ENCODE measurements at regions of chr21 and their contacts with region 1.

Region 1: GRCh38 chr21:35204850-35205541 is 155.9 kb upstream of the RUNX1 start:
- DNase-seq: peak; percentile 98
- ATAC-seq: peak; percentile 78
- H3K4me3 ChIP-seq: peak overlapping the region; percentile 25; the same call in 1 of the 2 replicates
- H3K27ac ChIP-seq: peak overlapping the region; percentile 91
- H3K4me1 ChIP-seq: peaks cover 40% of the 10 kb centered on the region
- H3K27me3 ChIP-seq: no peaks in the 10 kb centered on the region
- CTCF ChIP-seq: peak; percentile 44
- POLR2A ChIP-seq: peak; percentile 53; the same call in 1 of the 2 replicates
- RAD21 ChIP-seq: peak; percentile 43

Region 2: GRCh38 chr21:34807146-34807880 is 397.7 kb before region 1 on chr21:
- CTCF ChIA-PET with region 1: no interaction called
- POLR2A ChIA-PET with region 1: no interaction called
- dilution Hi-C with region 1: no loop called
- in situ Hi-C with region 1: no loop called
- intact Hi-C with region 1: loop called (anchors 5 kb)
- DNase-seq: peak; percentile 97
- ATAC-seq: peak; percentile 62
- H3K4me3 ChIP-seq: no peak overlapping the region
- H3K27ac ChIP-seq: peak overlapping the region; percentile 92
- H3K4me1 ChIP-seq: peaks cover 44% of the 10 kb centered on the region
- H3K27me3 ChIP-seq: no peaks in the 10 kb centered on the region
- CTCF ChIP-seq: no peak
- POLR2A ChIP-seq: no peak; the same call in 1 of the 2 replicates
- RAD21 ChIP-seq: no peak

Region 3: GRCh38 chr21:35043549-35043948 is 161.4 kb before region 1 on chr21:
- CTCF ChIA-PET with region 1: no interaction called
- POLR2A ChIA-PET with region 1: no interaction called
- dilution Hi-C with region 1: no loop called
- in situ Hi-C with region 1: no loop called
- intact Hi-C with region 1: no loop called
- DNase-seq: no peak
- ATAC-seq: no peak
- H3K4me3 ChIP-seq: no peak overlapping the region
- H3K27ac ChIP-seq: no peak overlapping the region
- H3K4me1 ChIP-seq: peaks cover 12% of the 10 kb centered on the region
- H3K27me3 ChIP-seq: no peaks in the 10 kb centered on the region
- CTCF ChIP-seq: no peak
- POLR2A ChIP-seq: no peak
- RAD21 ChIP-seq: no peak

Region 4: GRCh38 chr21:35084869-35085268 is 120.1 kb before region 1 on chr21:
- CTCF ChIA-PET with region 1: interaction called, 4 read pairs
- POLR2A ChIA-PET with region 1: interaction called, 9 read pairs
- dilution Hi-C with region 1: no loop called
- in situ Hi-C with region 1: no loop called
- intact Hi-C with region 1: loop called (anchors 5 kb)
- DNase-seq: peak; percentile 99
- ATAC-seq: peak; percentile 88
- H3K4me3 ChIP-seq: no peak overlapping the region
- H3K27ac ChIP-seq: peak overlapping the region; percentile 65; the same call in 1 of the 2 replicates
- H3K4me1 ChIP-seq: peaks cover 10% of the 10 kb centered on the region
- H3K27me3 ChIP-seq: no peaks in the 10 kb centered on the region
- CTCF ChIP-seq: peak; percentile 31
- POLR2A ChIP-seq: no peak
- RAD21 ChIP-seq: no peak

Region 5: DNA sequence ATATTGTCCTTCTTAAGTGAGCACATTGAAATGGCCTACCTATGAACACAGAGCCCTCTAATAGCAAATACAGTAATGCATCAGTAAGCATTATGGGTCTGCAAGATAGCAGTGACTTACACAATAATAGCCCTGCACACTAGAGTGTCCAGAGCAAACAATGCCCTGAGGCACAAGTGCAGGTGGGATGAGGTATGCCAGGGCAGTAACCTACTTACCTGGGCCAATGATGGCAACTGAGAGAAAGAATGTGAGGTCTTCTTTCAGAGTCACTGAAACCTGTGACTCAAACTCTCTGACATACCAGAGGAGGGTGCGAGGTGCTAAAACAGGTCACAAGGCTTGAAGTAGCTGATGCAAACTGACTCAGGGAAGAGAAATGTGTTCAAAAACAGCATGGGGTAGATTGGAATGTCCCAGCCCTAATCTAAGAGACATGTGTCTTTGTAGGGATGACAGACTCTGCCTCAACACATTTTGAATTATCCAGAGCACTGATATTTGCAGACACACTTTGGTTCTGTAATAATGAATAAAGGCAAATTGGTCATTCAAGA is 12.6 kb after region 1 on chr21:
- CTCF ChIA-PET with region 1: no interaction called
- POLR2A ChIA-PET with region 1: no interaction called
- dilution Hi-C with region 1: no loop called
- in situ Hi-C with region 1: no loop called
- intact Hi-C with region 1: no loop called
- DNase-seq: peak; percentile 85
- ATAC-seq: peak; percentile 77
- H3K4me3 ChIP-seq: no peak overlapping the region
- H3K27ac ChIP-seq: no peak overlapping the region
- H3K4me1 ChIP-seq: peaks cover 8% of the 10 kb centered on the region
- H3K27me3 ChIP-seq: no peaks in the 10 kb centered on the region
- CTCF ChIP-seq: no peak
- POLR2A ChIP-seq: no peak
- RAD21 ChIP-seq: no peak

Region 6: DNA sequence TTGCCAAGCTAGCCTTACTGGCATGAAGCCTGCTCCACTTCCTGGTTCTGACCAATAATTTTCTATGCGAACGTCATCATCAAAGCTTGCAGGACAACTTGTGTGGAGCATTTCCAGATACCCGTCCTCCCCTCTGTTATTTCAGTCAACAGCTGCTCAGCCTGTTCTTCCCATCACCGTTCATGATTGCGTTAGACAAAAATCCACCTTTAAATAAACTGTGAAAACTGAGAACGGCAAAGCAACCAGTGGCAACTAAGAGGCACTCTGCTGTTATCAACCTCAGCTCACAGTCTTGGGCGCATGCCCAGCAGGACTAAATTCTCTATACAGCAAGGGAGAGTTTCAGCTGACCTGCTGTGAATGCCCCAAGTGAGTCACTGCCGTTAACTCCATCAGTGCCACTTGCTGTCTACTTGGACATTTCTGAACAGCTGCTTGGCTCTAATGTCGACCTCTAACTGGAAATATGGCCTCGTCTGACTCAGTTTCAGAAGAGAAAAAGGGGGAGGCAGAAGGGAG is 51.5 kb after region 1 on chr21:
- CTCF ChIA-PET with region 1: interaction called, 4 read pairs
- POLR2A ChIA-PET with region 1: no interaction called
- dilution Hi-C with region 1: no loop called
- in situ Hi-C with region 1: no loop called
- intact Hi-C with region 1: loop called (anchors 2 kb)
- DNase-seq: peak; percentile 100
- ATAC-seq: peak; percentile 94
- H3K4me3 ChIP-seq: no peak overlapping the region
- H3K27ac ChIP-seq: peak overlapping the region; percentile 49; the same call in 1 of the 2 replicates
- H3K4me1 ChIP-seq: peaks cover 8% of the 10 kb centered on the region
- H3K27me3 ChIP-seq: no peaks in the 10 kb centered on the region
- CTCF ChIP-seq: no peak; the same call in 1 of the 2 replicates
- POLR2A ChIP-seq: no peak
- RAD21 ChIP-seq: peak; percentile 40

Region 7: GRCh38 chr21:35316933-35317332 is 111.9 kb after region 1 on chr21:
- CTCF ChIA-PET with region 1: no interaction called
- POLR2A ChIA-PET with region 1: no interaction called
- dilution Hi-C with region 1: no loop called
- in situ Hi-C with region 1: no loop called
- intact Hi-C with region 1: no loop called
- DNase-seq: peak; percentile 86
- ATAC-seq: peak; percentile 75
- H3K4me3 ChIP-seq: no peak overlapping the region
- H3K27ac ChIP-seq: no peak overlapping the region
- H3K4me1 ChIP-seq: peaks cover 6% of the 10 kb centered on the region
- H3K27me3 ChIP-seq: no peaks in the 10 kb centered on the region
- CTCF ChIP-seq: no peak
- POLR2A ChIP-seq: no peak
- RAD21 ChIP-seq: no peak

Region 8: DNA sequence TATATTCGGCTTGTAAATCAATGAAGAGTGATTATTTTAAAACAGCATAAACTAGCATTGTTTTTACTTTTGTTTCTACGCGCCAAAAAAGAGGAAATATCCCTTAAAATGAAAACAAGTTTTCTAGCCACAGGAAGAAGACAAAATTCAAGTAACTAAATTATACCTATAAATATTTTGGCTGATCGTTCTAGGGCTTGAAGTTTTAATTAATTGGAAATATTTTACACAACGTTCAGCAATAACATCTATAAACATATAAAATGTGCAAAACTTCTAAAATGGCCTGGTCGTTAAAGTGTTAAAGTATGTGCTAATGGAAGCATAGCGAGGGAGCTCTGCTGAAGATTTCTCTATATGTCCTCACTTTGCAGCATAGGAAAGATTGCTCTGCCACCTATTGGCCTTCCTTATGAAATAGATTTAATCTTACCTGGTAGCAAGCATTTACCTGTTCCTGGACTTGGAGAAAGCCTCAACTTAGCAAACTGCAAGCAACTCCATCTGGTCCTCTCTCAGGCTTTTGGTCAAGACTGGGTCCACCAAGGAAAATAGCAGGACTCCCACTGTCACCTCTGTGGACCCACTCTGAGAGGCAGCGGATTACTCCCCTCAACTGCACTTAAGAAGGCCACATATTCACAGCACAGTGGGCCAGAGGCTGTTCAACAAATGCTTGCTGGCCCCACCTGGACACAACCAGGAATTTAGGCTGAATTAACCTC is 195.4 kb after region 1 on chr21:
- CTCF ChIA-PET with region 1: no interaction called
- POLR2A ChIA-PET with region 1: no interaction called
- dilution Hi-C with region 1: no loop called
- in situ Hi-C with region 1: no loop called
- intact Hi-C with region 1: loop called (anchors 5 kb)
- DNase-seq: peak; percentile 67
- ATAC-seq: peak; percentile 53; the same call in 1 of the 2 replicates
- H3K4me3 ChIP-seq: no peak overlapping the region
- H3K27ac ChIP-seq: no peak overlapping the region
- H3K4me1 ChIP-seq: peaks cover 8% of the 10 kb centered on the region
- H3K27me3 ChIP-seq: no peaks in the 10 kb centered on the region
- CTCF ChIP-seq: peak; percentile 61
- POLR2A ChIP-seq: 0 out of 2 replicates have a peak, but pooled peaks have one; percentile 25
- RAD21 ChIP-seq: peak; percentile 78

Region 9: GRCh38 chr21:35616090-35616489 is 411.1 kb after region 1 on chr21:
- CTCF ChIA-PET with region 1: interaction called, 3 read pairs
- POLR2A ChIA-PET with region 1: no interaction called
- dilution Hi-C with region 1: no loop called
- in situ Hi-C with region 1: no loop called
- intact Hi-C with region 1: loop called (anchors 10 kb)
- DNase-seq: peak; percentile 70
- ATAC-seq: peak; percentile 66
- H3K4me3 ChIP-seq: no peak overlapping the region
- H3K27ac ChIP-seq: no peak overlapping the region
- H3K4me1 ChIP-seq: peaks cover 9% of the 10 kb centered on the region
- H3K27me3 ChIP-seq: no peaks in the 10 kb centered on the region
- CTCF ChIP-seq: peak; percentile 60
- POLR2A ChIP-seq: no peak
- RAD21 ChIP-seq: peak; percentile 63